Heart right ventricle (tissue), 16 donors: ENCODE measurements at regions of chr5 and their contacts with region 1.

Region 1: GRCh38 chr5:74772359-74772758 is 5.3 kb downstream of the NSA2 start:
- DNase-seq: no peak
- ATAC-seq: no peak
- H3K4me3 ChIP-seq: no peak overlapping the region
- H3K27ac ChIP-seq: no peak overlapping the region
- H3K4me1 ChIP-seq: peaks cover 0 to 13% (median 10%) of the 10 kb centered on the region in 9 donors
- H3K27me3 ChIP-seq: no peaks in the 10 kb centered on the region
- CTCF ChIP-seq: no peak

Region 2: DNA sequence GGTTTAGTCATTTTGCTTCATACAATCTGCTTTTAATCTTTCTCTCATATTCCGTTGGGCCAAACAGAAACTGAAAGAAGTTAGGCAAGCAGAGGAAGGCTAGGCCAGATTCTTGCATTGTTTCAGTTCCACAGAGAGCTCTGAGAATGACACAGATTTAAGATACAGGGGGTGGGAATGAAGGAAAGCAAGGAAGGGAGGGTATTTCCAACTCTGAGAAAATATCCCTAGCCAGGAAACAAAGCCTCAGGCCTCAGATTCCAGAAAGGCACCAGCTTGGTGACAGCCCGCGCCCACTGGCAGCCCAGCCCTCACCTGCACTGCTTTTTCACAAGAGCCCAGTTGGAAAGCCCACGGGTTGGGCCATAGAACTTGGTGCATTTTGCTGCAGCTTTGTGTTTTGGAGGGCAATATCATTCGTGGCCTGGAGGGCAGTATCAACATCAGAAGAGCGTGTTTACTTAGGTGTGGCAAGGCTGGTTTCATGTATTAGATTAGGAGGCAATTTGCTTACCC is 195.4 kb before region 1 on chr5:
- intact Hi-C with region 1: no loop called
- DNase-seq: peak in 1 of 2 donors; percentile 28
- ATAC-seq: peak in 7 of 8 donors; percentile 76 to 95 (median 89)
- H3K4me3 ChIP-seq: peak overlapping the region in 5 of 10 donors; percentile 8 to 21 (median 12)
- H3K27ac ChIP-seq: peak overlapping the region in 9 of 10 donors; percentile 54 to 87 (median 74)
- H3K4me1 ChIP-seq: peaks cover 0 to 26% (median 16%) of the 10 kb centered on the region in 9 donors
- H3K27me3 ChIP-seq: no peaks in the 10 kb centered on the region
- CTCF ChIP-seq: no peak

Region 3: DNA sequence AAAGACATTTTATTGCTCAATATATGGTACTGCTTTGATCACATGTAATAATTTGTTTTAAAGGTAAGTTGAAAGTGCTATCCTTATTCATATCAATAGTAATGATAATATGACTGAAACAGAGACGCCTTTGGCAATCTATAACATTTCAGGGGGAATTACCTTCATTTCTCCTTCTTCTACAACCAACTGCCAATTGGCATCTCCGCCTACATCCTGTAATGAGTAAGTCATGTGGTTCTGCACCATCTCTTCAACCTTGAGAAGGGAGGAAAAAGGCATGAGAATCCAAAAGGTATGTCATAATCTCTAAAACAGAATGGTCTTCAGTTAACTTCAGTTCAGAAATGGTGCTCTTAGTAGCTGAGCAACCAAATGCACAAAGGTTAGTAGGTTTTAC is 617.1 kb after region 1 on chr5:
- intact Hi-C with region 1: loop called in 1 of 10 experiments (anchors 10 kb)
- DNase-seq: no peak
- ATAC-seq: no peak
- H3K4me3 ChIP-seq: no peak overlapping the region
- H3K27ac ChIP-seq: no peak overlapping the region
- H3K4me1 ChIP-seq: no peaks in the 10 kb centered on the region
- H3K27me3 ChIP-seq: no peaks in the 10 kb centered on the region
- CTCF ChIP-seq: no peak